Lower leg skin (tissue), 4 donors: ENCODE measurements at regions of chr6 and their contacts with region 1.

Region 1: DNA sequence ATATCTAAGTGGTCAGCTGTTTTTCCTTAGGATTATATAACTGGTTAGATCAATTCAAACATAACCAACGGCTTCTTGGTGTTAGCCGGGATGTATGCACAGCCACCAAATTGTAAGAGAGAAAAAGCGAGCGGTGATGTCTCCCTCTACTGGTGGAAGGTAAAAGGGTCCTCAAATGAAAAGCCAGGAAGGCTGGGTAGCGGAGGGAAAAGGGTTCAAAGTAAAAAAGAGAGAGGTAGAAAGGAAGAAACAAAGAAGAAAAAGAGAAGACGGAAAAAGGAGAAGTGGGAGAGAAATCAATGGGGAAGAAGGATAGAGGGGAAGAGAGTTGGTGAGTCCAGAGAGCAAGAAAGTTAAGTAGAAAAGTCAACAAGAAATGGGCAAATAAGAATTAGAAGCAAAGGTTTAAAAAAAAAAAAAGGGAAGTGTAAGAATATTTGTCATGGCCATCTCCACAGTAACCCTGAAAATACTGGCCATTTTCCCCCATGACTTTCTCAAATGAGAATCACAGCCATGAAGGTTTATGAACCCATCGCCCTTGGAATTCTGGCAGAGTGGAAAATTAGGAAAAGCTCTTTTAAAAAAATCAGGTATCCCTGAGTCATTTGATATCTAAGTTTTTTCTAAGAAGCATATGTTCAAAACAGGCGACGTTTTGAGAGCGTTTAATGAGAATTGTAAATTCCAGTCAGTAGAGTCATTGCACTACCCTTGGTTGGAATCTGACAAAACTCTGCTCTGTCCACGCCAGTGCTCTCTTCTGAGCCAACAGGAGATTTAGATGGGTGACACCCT is 155.6 kb upstream of the SNX9 start:
- DNase-seq: peak; percentile 45 to 85
- H3K4me3 ChIP-seq: no peak overlapping the region
- CTCF ChIP-seq: peak in 1 of 3 donors; percentile 52
- POLR2A ChIP-seq: no peak

Region 2: GRCh38 chr6:157314705-157315321 is 352.6 kb before region 1 on chr6:
- intact Hi-C with region 1: loop called (anchors 5 kb)
- DNase-seq: no peak
- H3K4me3 ChIP-seq: no peak overlapping the region
- CTCF ChIP-seq: peak in 1 of 3 donors; percentile 58
- POLR2A ChIP-seq: no peak